B cell (primary cell): ENCODE measurements at regions of chr14 and their contacts with region 1.

Region 1: DNA sequence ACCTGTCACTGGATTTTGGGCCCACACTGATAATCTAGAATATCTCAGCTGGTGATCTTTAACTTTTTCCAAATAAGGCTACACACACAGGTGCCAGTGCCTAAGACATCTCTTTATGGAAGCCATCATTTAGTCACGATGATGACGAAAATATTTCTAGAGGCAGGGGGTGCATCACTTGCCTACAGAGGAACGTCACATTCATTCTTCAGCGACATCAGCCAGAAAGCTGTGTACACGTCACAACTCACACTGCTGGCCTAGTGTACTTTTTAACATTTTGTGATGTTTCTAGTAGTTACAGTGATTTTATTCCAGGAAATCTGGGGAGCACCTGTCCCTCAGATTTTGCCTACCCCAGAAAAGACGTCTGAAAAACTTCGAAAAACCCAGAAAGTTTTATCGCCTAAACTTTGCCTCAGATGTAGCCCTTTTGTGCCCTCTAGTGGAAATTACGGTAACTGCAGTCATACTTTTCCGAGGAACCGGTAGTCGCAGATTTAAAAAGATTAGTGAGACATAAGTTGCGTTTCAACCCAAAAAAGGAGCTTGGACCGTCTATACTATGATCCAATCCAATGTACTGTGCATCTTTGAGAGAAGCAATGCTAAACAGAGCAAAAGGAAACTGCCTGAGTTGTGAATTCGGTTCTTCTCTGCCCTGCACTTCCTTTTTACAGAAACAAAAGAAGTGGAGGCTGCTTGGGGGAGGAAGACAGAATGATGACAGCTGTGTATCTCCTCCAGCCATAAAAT is 64.3 kb upstream of the STON2 start:
- DNase-seq: peak; percentile 80
- ATAC-seq: peak; percentile 79
- H3K4me3 ChIP-seq: peak overlapping the region; percentile 57 to 73 (median 66)
- H3K4me3 Mint-ChIP-seq: peak overlapping the region; percentile 90
- H3K27ac ChIP-seq: peak overlapping the region; percentile 62 to 75
- H3K27ac Mint-ChIP-seq: peak overlapping the region; percentile 80
- H3K4me1 ChIP-seq: peaks cover 0 to 9% of the 10 kb centered on the region in 2 donors
- H3K4me1 Mint-ChIP-seq: peaks cover 6% of the 10 kb centered on the region
- H3K27me3 ChIP-seq: no peaks in the 10 kb centered on the region
- H3K27me3 Mint-ChIP-seq: no peaks in the 10 kb centered on the region
- CTCF ChIP-seq: peak; percentile 93

Region 2: DNA sequence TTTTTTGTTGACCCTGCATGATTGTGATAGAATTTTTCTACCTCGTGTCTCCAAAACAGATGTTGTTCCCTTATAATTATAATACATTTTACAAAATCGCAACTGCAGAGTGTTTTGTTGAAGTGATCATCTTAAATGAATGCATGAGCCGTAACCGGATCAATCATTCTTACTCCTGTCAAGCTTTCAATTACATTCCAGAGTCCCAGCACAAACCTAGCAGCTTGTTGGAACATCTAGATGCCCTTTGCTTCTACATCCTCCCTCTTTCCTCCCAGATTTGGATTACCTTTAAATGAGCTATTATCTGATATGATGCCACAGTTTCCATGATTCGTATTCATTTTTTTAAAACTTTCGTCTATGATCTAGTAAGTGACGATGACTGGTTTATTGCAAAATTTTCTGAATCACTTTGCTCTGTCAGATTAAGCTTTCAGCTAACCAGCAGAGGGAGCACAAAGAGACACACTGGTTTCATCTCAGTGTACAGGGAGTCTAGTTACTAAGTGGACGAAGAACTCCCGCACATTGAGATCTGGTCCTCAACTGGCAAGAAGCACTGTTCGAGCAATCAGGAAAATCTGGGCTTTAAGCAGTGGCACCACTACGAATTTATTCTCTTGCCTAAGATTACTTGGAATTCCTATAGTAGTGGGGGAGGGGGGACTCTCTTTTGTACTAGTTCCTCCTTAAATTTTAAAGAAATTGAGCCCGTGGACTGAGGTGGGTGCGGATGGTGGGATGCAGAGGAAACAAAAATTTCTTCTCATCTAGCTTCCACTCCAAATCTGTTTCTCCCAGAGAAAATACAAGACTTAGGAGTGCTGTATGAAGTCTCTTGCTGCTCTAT is 468.1 kb before region 1 on chr14:
- CTCF ChIA-PET with region 1: interaction called, 9 read pairs
- POLR2A ChIA-PET with region 1: no interaction called
- intact Hi-C with region 1: loop called (anchors 2 kb)
- DNase-seq: peak; percentile 52
- ATAC-seq: peak; percentile 61
- H3K4me3 ChIP-seq: no peak overlapping the region
- H3K4me3 Mint-ChIP-seq: no peak overlapping the region
- H3K27ac ChIP-seq: no peak overlapping the region
- H3K27ac Mint-ChIP-seq: no peak overlapping the region
- H3K4me1 ChIP-seq: peaks cover 4 to 7% of the 10 kb centered on the region in 2 donors
- H3K4me1 Mint-ChIP-seq: peaks cover 4% of the 10 kb centered on the region
- H3K27me3 ChIP-seq: peaks cover 0 to 4% (median 1%) of the 10 kb centered on the region in 4 experiments
- H3K27me3 Mint-ChIP-seq: peaks cover 38% of the 10 kb centered on the region
- CTCF ChIP-seq: peak; percentile 61

Region 3: DNA sequence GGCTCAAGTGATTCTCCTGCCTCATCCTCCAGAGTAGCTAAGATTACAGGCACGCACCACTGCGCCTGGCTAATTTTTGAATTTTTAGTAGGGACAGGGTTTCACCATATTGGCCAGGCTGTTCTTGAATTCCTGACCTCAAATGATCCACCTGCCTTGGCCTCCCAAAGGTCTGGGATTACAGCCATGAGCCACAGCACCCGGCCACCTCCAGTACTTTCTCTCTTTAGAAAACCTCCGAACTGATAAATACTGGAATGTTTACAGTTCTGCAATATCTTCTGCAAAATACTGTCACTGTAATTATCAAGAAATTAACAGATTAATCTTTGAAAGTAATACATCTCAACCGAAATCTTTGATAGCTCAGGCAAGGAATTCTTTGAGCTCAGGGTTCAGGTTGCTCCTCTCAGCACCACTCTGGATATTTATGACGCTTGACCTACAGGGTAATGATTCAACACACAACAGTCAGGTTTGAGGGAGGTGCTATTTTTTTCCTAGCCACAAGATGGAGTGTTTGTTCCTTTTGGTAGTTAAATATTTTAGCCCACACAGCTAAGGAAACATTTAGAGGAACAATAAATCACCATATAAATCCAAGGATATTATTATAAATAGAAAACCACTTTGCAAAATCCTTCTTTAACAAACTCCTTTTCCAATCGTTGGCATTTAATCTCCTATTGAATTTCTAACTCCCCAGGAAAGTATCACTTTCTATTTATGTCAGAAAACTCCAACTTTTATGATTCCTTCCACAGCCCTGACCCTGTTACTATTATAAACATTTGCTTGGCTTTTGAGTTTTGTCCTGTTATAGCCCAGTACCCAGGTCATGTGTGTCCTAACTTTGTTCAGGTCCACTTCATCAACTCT is 195.1 kb before region 1 on chr14:
- CTCF ChIA-PET with region 1: interaction called, 26 read pairs
- POLR2A ChIA-PET with region 1: no interaction called
- intact Hi-C with region 1: loop called (anchors 1 kb)
- DNase-seq: peak; percentile 51
- ATAC-seq: no peak
- H3K4me3 ChIP-seq: no peak overlapping the region
- H3K4me3 Mint-ChIP-seq: no peak overlapping the region
- H3K27ac ChIP-seq: no peak overlapping the region
- H3K27ac Mint-ChIP-seq: no peak overlapping the region
- H3K4me1 ChIP-seq: no peaks in the 10 kb centered on the region
- H3K4me1 Mint-ChIP-seq: no peaks in the 10 kb centered on the region
- H3K27me3 ChIP-seq: peaks cover 0 to 12% (median 0%) of the 10 kb centered on the region in 4 experiments
- H3K27me3 Mint-ChIP-seq: peaks cover 34% of the 10 kb centered on the region
- CTCF ChIP-seq: peak; percentile 78

Region 4: DNA sequence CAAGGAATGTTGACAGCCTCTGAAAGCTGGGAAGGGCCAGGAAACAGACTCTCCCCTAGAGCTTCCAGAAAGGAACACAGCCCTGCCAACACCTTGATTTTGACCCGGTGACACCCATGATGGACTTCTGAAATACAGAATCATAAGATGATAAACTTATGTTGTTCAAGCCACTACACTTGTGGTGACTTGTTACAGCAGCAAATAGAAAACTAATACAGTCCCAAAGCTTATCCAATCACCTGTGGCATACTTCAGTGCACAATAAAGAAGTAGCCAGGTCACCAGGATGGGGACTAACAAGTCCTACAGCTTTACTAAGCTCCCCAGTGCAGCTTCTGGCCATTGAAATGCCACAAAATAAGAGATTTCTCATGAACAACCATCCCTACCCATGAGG is 69.7 kb before region 1 on chr14:
- CTCF ChIA-PET with region 1: no interaction called
- POLR2A ChIA-PET with region 1: interaction called, 10 read pairs
- intact Hi-C with region 1: no loop called
- DNase-seq: no peak
- ATAC-seq: no peak
- H3K4me3 ChIP-seq: no peak overlapping the region
- H3K4me3 Mint-ChIP-seq: no peak overlapping the region
- H3K27ac ChIP-seq: no peak overlapping the region
- H3K27ac Mint-ChIP-seq: no peak overlapping the region
- H3K4me1 ChIP-seq: no peaks in the 10 kb centered on the region
- H3K4me1 Mint-ChIP-seq: no peaks in the 10 kb centered on the region
- H3K27me3 ChIP-seq: no peaks in the 10 kb centered on the region
- H3K27me3 Mint-ChIP-seq: peaks cover 3% of the 10 kb centered on the region
- CTCF ChIP-seq: no peak

Region 5: DNA sequence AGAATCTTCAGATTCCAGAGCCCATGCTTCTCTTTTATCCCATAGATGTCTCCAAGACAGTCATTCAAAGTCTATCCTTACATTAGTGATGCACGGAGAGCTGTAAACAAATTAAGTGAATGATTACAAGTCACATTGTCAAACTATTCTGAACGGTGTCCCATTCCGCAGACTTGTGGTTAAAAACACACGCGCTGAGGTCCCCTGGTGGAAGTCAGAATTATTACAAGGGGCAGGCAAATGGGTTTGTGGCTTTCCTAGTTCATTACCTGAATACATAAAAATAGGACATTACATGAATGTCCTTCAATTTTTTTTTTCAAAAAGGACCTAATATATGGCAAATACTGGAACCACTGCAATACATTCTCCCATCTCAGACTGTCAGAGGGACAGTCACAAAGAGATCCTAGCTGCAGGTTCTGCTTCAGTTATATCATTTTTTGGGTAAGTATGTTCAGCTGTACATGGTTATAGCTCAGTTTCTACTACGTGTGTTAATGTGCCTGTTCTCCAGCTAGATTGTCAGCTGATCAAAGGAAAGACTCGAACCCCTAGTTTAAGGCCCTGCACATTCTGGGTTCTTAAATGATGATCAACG is 11.2 kb before region 1 on chr14:
- CTCF ChIA-PET with region 1: interaction called, 14 read pairs
- POLR2A ChIA-PET with region 1: no interaction called
- intact Hi-C with region 1: no loop called
- DNase-seq: peak; percentile 59
- ATAC-seq: peak; percentile 76
- H3K4me3 ChIP-seq: no peak overlapping the region
- H3K4me3 Mint-ChIP-seq: no peak overlapping the region
- H3K27ac ChIP-seq: no peak overlapping the region
- H3K27ac Mint-ChIP-seq: no peak overlapping the region
- H3K4me1 ChIP-seq: peaks cover 0 to 3% of the 10 kb centered on the region in 2 donors
- H3K4me1 Mint-ChIP-seq: peaks cover 8% of the 10 kb centered on the region
- H3K27me3 ChIP-seq: peaks cover 0 to 7% (median 0%) of the 10 kb centered on the region in 4 experiments
- H3K27me3 Mint-ChIP-seq: peaks cover 28% of the 10 kb centered on the region
- CTCF ChIP-seq: peak; percentile 93

Region 6: GRCh38 chr14:81533536-81534343 is 69.3 kb after region 1 on chr14 and contains the start of gene SEL1L:
- CTCF ChIA-PET with region 1: interaction called, 10 read pairs
- POLR2A ChIA-PET with region 1: no interaction called
- intact Hi-C with region 1: no loop called
- DNase-seq: peak; percentile 99
- ATAC-seq: peak; percentile 97
- H3K4me3 ChIP-seq: peak within 1 kb of the TSS; percentile 86 to 96 (median 92)
- H3K4me3 Mint-ChIP-seq: peak within 1 kb of the TSS; percentile 98
- H3K27ac ChIP-seq: peak within 1 kb of the TSS in 1 of 2 donors; percentile 77
- H3K27ac Mint-ChIP-seq: peak within 1 kb of the TSS; percentile 95
- H3K4me1 ChIP-seq: peaks cover 32% of the 10 kb centered on the region in 2 donors
- H3K4me1 Mint-ChIP-seq: peaks cover 54% of the 10 kb centered on the region
- H3K27me3 ChIP-seq: no peaks in the 10 kb centered on the region
- H3K27me3 Mint-ChIP-seq: no peaks in the 10 kb centered on the region
- CTCF ChIP-seq: no peak
- total RNA-seq, gene SEL1L: 50.0 and 53.8 TPM in 2 replicates

Region 7: GRCh38 chr14:81737938-81738337 is 273.5 kb after region 1 on chr14:
- CTCF ChIA-PET with region 1: no interaction called
- POLR2A ChIA-PET with region 1: no interaction called
- intact Hi-C with region 1: no loop called
- DNase-seq: no peak
- ATAC-seq: no peak
- H3K4me3 ChIP-seq: no peak overlapping the region
- H3K4me3 Mint-ChIP-seq: no peak overlapping the region
- H3K27ac ChIP-seq: no peak overlapping the region
- H3K27ac Mint-ChIP-seq: no peak overlapping the region
- H3K4me1 ChIP-seq: no peaks in the 10 kb centered on the region
- H3K4me1 Mint-ChIP-seq: no peaks in the 10 kb centered on the region
- H3K27me3 ChIP-seq: no peaks in the 10 kb centered on the region
- H3K27me3 Mint-ChIP-seq: no peaks in the 10 kb centered on the region
- CTCF ChIP-seq: no peak